ENCODE measurements at regions of chr5 and their contacts with region 1.

Region 1: GRCh38 chr5:14816999-14817761 is 54.4 kb downstream of the ANKH start:
- DNase-seq: no peak
- H3K4me3 Mint-ChIP-seq: no peak overlapping the region
- H3K27ac Mint-ChIP-seq: peak overlapping the region; percentile 0
- H3K4me1 Mint-ChIP-seq: peaks cover 29% of the 10 kb centered on the region
- H3K27me3 Mint-ChIP-seq: peaks cover 4% of the 10 kb centered on the region

Region 2: DNA sequence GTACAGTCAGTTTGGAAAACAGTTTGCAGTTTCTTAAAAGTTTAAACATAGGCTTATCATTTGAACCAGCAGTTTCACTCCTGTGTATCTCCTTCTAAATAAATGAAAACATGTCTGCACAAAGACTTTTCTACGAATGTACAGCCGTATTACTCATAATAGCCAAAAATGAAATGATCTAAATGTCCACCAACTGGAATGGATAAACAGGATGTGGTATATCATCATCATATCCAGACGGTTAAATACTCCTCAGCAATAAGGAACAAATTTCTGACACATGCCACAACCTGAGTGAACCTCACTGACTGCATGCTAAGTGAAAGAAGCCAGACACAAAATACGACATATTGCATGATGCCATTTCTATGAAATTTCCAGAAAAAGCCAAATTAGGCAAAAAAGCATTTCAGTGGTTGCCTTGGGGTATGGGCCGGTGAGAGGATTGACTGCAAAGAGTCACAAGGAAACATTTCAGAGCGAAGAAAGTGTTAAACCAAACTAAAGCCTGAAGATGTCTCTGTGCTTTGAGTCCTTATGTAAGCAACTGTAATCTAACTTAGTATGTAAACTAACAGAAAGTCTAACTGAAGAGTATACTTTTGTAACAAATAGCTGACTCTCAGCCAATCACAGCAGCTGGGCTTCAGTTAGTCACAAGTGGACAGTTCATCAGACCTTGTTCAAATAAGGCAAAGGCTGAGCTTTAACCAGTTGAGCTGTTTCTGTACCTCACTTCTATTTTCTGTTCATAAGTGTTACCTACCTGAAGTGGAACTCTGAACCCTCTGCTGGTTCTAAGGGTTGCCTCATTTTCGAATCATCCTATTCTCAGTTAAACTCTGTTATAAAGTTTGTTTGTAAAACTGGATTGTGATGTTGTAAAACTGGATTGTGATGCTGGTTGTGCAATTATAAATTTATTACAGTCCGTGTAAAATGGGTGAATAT is 608.8 kb before region 1 on chr5:
- intact Hi-C with region 1: no loop called
- DNase-seq: no peak
- H3K4me3 Mint-ChIP-seq: no peak overlapping the region
- H3K27ac Mint-ChIP-seq: peak overlapping the region; percentile 67
- H3K4me1 Mint-ChIP-seq: peaks cover 22% of the 10 kb centered on the region
- H3K27me3 Mint-ChIP-seq: peaks cover 4% of the 10 kb centered on the region

Region 3: DNA sequence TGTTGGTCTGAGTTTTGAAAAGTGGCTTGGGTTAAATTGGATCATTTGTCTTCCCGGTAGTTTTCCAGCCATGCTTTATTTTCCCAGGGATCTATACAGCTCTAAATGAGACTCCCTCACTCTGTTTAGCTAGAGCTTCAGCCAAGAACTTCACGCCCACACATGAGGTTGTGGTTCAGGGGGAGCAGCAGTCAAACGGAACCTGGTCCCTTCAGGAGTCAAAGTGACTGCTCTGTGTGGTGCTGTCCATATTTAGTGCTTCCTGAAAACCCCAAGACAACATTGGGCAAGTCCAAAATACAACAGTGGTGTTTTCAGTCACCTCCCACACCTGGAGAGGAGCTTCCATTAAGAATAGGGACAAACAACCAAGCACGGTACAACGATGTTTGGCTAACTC is 36.1 kb before region 1 on chr5:
- intact Hi-C with region 1: loop called (anchors 5 kb)
- DNase-seq: no peak
- H3K4me3 Mint-ChIP-seq: no peak overlapping the region
- H3K27ac Mint-ChIP-seq: no peak overlapping the region
- H3K4me1 Mint-ChIP-seq: peaks cover 24% of the 10 kb centered on the region
- H3K27me3 Mint-ChIP-seq: no peaks in the 10 kb centered on the region

Region 4: GRCh38 chr5:14871210-14872069 is 54.3 kb after region 1 on chr5 and contains the start of gene ANKH:
- intact Hi-C with region 1: no loop called
- DNase-seq: peak; percentile 95
- H3K4me3 Mint-ChIP-seq: peak within 1 kb of the TSS; percentile 88
- H3K27ac Mint-ChIP-seq: peak within 1 kb of the TSS; percentile 91
- H3K4me1 Mint-ChIP-seq: peaks cover 26% of the 10 kb centered on the region
- H3K27me3 Mint-ChIP-seq: peaks cover 19% of the 10 kb centered on the region
- total RNA-seq, gene ANKH: 41.6 and 46.7 TPM in 2 replicates

Measured in activated CD4-positive, alpha-beta T cell treated with anti-CD3 and anti-CD28 coated beads, Interleukin-2, amount 10 ng/mL, durations not matched to agents 24 days and 14 days (primary cell).